BJ (cell line): ENCODE measurements at regions of chr6 and their contacts with region 1.

Region 1: GRCh38 chr6:53171605-53172446 is 23.2 kb upstream of the GCM1 start:
- DNase-seq: no peak
- H3K4me3 ChIP-seq: no peak overlapping the region
- H3K27me3 ChIP-seq: no peaks in the 10 kb centered on the region
- CTCF ChIP-seq: peak; percentile 100

Region 2: DNA sequence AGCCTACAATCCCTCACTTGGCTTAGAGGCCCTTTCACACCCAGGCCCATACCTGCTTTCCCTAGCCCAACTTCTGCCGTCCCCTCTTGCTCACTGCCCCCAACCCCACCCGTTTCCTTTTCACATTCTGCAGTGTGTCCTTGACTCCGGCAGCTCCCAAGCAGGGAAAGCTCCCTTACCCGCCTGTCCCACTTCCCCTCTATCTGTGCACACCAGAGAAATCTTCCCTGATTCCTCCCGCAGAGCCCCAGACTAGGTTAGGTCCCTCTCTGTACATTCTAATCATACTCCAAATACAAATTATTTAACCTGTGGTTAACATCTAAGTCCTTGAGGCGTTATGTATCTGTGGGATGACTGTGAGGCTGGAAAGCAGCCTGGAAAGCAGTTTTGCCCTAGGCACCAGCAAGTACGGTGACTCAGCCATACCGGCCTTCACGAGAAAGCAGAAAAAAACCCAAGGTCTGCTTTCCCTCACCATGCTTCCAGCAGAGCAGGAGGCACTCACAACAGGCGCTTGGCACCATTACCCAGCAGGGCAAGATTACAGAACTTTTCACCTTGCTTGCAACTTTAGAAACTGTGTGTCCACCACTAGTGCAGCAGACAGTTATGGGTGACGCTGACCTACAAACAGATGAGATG is 154.7 kb after region 1 on chr6:
- CTCF ChIA-PET with region 1: interaction called, 13 read pairs
- POLR2A ChIA-PET with region 1: no interaction called
- DNase-seq: peak; percentile 99
- H3K4me3 ChIP-seq: no peak overlapping the region
- H3K27me3 ChIP-seq: no peaks in the 10 kb centered on the region
- CTCF ChIP-seq: no peak

Region 3: DNA sequence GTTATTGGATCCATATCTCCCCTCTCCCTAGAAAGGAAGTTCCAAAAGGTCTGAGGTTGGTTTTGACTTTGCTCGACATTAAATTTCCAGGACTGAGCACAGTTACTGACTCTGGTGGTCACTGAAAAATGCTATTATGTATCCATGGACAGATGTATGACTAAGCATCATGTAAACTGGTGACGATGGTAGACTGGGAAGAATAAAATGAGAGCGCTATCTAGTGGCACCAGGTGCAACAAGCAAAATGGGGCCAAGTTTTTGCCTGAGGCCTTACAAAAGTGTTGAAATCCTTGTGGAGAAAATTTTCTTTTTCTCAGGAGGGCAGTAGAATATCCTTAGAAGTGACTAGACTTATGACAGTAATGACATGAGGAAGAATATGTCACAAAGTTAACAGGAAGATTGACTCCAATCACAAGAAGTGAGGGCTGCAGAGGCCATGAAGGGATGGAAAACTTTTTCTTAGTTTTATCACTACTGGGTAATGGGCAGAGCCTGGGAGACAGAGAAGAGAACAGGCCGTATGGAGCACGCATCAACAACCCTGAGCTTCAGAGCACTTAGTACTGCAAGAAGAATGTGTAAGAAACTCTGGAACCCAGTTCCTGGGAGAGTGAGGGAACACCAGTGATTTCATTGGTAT is 265.9 kb after region 1 on chr6:
- CTCF ChIA-PET with region 1: interaction called, 29 read pairs
- POLR2A ChIA-PET with region 1: no interaction called
- DNase-seq: peak; percentile 49
- H3K4me3 ChIP-seq: no peak overlapping the region
- H3K27me3 ChIP-seq: no peaks in the 10 kb centered on the region
- CTCF ChIP-seq: peak; percentile 65

Region 4: GRCh38 chr6:53476964-53477363 is 305.1 kb after region 1 on chr6:
- CTCF ChIA-PET with region 1: interaction called, 143 read pairs
- POLR2A ChIA-PET with region 1: no interaction called
- DNase-seq: peak; percentile 69
- H3K4me3 ChIP-seq: no peak overlapping the region
- H3K27me3 ChIP-seq: no peaks in the 10 kb centered on the region; the same call in none of the 2 replicates
- CTCF ChIP-seq: no peak

Region 5: DNA sequence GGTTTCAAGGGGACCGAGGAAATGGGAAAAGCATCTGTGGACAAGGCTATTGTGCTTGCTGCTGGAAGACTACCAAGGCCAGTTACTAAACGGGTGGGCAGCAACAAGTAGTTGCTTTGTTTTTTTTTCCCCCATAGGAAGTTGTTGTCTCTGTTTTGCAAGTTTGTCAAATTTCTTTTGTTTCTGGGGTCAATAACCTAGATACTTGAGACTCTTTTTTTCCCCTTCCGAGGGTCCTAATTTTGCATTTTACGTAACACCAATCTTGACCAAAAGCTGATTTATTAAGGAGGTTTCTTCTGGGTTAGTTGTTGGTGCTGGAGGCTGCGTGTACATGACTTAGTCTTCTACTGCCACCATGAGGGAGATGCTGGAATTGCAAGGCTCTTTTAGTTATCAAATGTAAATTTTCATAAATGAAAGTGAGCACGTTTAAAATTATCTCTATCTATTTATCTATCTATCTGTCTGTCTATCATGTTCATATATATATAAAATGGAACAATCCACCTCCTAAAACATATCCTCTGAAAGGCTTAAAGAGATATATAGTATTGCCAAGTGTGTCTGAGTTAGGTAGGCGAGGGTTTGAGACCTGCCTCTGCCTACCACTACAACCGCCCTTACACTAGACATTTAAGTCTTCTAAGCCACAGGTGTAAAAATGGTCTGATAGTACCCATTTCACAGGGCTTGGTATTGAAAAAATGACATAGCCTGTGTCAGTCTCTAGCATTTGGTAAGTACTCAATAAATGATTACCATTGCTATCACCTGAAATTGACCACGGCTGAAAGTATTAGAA is 312.9 kb after region 1 on chr6:
- CTCF ChIA-PET with region 1: interaction called, 143 read pairs
- POLR2A ChIA-PET with region 1: no interaction called
- DNase-seq: no peak
- H3K4me3 ChIP-seq: no peak overlapping the region
- H3K27me3 ChIP-seq: peaks cover 3% of the 10 kb centered on the region; the same call in 1 of the 2 replicates
- CTCF ChIP-seq: peak; percentile 88